WTC11 (cell line): ENCODE measurements at regions of chr2 and their contacts with region 1.

Region 1: GRCh38 chr2:11681722-11682589 is 12.0 kb upstream of the NTSR2 start:
- DNase-seq: peak; percentile 84
- ATAC-seq: peak; percentile 65
- H3K4me3 Mint-ChIP-seq: no peak overlapping the region
- H3K27ac Mint-ChIP-seq: no peak overlapping the region; the same call in 1 of the 2 replicates
- H3K4me1 Mint-ChIP-seq: peaks cover 53% of the 10 kb centered on the region
- H3K27me3 Mint-ChIP-seq: no peaks in the 10 kb centered on the region
- CTCF ChIP-seq: peak; percentile 100

Region 2: DNA sequence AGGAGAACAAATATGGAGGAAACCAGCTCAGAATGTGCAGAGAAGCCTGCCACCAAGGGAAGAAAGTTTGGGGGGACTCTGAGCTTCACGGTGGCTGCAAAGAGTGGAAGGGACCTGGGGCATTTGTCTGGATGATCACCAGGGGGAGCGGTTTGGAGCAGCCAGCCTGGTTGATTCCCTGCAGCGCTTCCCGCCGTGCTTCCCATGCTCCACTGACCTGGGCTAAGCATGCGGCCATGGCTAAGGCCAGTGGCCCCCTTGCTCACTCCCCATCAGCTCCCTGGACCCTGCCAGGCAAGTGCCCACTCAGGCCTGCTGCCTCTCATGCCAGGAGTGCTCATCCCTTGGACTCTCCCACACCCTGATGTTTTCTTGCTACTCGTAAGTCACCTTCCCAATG is 39.0 kb before region 1 on chr2:
- CTCF ChIA-PET with region 1: interaction called, 12 read pairs
- POLR2A ChIA-PET with region 1: no interaction called
- DNase-seq: peak; percentile 22
- ATAC-seq: peak; percentile 77
- H3K4me3 Mint-ChIP-seq: no peak overlapping the region
- H3K27ac Mint-ChIP-seq: no peak overlapping the region
- H3K4me1 Mint-ChIP-seq: no peaks in the 10 kb centered on the region
- H3K27me3 Mint-ChIP-seq: no peaks in the 10 kb centered on the region
- CTCF ChIP-seq: no peak

Region 3: GRCh38 chr2:11669454-11670291 is 12.3 kb before region 1 on chr2 and contains the start of gene NTSR2:
- CTCF ChIA-PET with region 1: interaction called, 13 read pairs
- POLR2A ChIA-PET with region 1: interaction called, 3 read pairs
- DNase-seq: peak; percentile 81
- ATAC-seq: peak; percentile 95
- H3K4me3 Mint-ChIP-seq: peak within 1 kb of the TSS; percentile 52
- H3K27ac Mint-ChIP-seq: no peak within 1 kb of the TSS; the same call in 1 of the 2 replicates
- H3K4me1 Mint-ChIP-seq: peaks cover 9% of the 10 kb centered on the region
- H3K27me3 Mint-ChIP-seq: peaks cover 33% of the 10 kb centered on the region
- CTCF ChIP-seq: no peak
- total RNA-seq, gene NTSR2: 0.16 TPM in 1 of 3 replicates, not detected in the others

Region 4: DNA sequence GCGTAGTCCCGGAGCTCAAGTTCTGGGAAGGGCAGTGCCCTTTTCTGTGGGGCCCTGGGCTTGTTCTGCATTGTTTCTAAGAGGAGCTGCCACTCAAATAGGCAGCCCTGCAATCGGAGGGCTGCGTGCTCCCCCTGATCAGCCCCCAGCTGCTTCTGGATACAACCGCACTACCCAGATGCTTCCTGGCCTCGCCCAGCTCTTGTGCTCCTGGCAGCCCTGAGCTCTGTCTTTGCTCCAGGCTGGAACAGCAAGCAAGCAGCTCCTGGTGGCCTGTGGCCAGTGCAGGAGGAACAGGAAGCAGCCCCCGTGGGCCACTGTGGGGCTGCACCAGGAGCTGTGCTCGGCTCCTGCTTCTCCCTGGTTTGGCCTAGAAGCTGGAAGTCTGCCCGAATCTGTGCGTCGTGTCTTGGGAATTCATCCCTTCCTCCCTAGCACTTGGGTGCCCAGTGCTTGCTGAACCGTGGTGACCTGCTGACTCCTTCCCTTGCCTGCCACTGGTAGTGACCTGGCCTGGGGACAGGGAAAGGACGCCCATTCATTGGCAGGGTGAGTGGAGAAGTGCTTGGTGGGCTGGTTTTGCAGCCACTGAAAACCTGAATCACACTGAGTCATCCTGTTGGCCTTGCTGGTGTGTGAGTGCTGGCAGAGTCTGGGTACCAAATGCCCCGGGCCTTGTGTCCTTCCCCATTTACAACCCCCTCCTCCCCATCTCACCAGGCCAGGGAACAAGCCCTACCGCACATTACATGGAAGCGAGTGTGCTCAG is 15.3 kb after region 1 on chr2:
- CTCF ChIA-PET with region 1: interaction called, 20 read pairs
- POLR2A ChIA-PET with region 1: no interaction called
- DNase-seq: no peak
- ATAC-seq: peak; percentile 13; the same call in 1 of the 2 replicates
- H3K4me3 Mint-ChIP-seq: no peak overlapping the region
- H3K27ac Mint-ChIP-seq: no peak overlapping the region
- H3K4me1 Mint-ChIP-seq: no peaks in the 10 kb centered on the region
- H3K27me3 Mint-ChIP-seq: no peaks in the 10 kb centered on the region
- CTCF ChIP-seq: no peak

Region 5: DNA sequence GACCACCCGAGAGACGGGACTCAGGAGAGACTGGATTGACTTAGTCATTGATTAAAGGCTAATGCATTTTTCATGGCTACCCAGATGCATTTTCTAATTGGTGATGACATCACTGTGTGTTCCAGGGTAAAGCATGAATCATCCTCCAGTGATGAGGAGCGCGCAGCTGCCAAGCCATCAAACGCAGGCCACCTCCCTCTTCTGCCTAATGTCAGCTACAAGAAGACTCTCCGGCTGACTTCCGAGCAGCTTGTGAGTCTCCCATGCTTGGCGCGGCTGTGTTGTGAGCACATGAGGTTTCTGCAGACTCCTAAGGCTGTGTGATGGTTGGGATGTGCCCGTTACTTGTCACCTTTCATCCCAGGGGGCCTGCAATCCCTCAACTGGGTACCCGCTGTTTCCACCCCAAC is 120.8 kb after region 1 on chr2:
- CTCF ChIA-PET with region 1: no interaction called
- POLR2A ChIA-PET with region 1: no interaction called
- DNase-seq: no peak
- ATAC-seq: no peak
- H3K4me3 Mint-ChIP-seq: no peak overlapping the region
- H3K27ac Mint-ChIP-seq: no peak overlapping the region
- H3K4me1 Mint-ChIP-seq: no peaks in the 10 kb centered on the region
- H3K27me3 Mint-ChIP-seq: no peaks in the 10 kb centered on the region
- CTCF ChIP-seq: no peak